ENCODE measurements at regions of chr17 and their contacts with region 1.

Region 1: GRCh38 chr17:63773381-63774140 is at the start of gene CCDC47:
- DNase-seq: peak; percentile 99
- total RNA-seq, gene CCDC47: 78.7 TPM

Region 2: GRCh38 chr17:62444063-62444462 is 1329.5 kb before region 1 on chr17:
- intact Hi-C with region 1: no loop called
- DNase-seq: no peak

Region 3: DNA sequence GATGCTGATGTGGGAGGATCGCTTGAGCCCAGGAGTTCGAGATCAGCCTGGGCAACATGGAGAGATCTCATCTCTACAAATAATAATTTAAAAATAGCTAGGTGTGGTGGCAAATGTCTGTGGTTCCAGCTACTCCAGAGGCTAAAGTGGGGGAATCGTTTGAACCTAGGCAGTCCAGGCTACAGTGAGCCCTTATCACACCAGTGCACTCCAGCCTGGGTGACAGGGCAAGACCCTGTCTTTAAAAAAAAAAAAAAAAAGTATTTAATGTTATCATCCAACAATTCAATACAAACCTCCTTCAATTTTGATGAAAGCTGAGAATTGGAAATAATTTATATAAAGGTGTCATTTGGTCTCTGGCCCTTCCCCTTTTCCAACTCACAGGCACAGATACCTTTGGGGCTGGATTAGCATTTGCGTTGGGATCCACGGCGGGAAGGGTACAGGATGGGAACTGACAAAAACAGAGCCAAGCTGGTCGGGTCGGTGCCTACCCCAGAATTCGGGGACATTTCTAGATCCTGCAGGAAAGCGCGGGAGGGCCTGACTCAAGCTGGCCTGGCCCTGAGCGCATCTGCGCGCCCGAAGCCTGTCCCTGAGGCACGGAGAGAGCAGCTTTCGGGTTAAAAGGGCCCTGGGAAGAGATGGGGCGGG is 224.1 kb before region 1 on chr17:
- intact Hi-C with region 1: no loop called
- DNase-seq: no peak

Region 4: DNA sequence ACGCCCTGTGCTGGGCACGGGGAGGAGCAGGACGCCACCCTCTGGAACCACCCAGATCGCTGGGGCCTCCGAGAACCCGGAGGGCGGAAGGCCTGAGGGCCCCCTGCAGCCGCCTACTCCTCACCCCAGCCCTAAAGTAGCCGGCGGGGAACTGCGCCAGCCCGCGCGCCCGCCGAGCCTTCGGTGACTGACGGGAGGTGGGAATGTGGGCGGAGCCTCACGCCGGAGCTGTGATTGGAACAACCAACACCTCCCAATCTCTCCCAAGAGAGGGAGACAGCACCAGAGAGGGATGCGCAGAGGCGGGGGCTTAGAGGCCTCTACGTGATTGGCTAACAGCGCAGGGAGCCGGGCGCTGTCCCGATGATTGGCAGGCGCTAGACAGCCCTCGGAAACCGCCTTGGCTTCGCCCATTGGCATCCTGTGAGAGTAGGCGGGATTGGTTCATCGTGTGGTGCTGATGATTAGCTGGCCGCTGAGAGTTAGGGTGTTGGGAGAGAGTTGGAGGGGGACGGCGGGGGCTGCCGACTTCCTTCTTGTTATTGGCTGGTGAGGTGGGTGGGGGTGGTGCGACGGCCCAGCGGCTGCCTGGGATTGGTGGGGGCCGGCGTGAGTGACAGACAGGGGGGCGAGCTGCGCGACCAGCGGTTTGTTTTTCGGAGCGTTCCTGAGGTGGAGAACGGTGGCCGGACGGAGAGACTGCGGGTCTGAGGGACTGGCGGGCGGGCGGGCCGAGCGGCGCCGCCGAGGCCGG is 151.6 kb before region 1 on chr17 and contains the start of gene MAP3K3:
- intact Hi-C with region 1: loop called (anchors 5 kb)
- DNase-seq: peak; percentile 100
- total RNA-seq, gene MAP3K3: 101 TPM

Region 5: DNA sequence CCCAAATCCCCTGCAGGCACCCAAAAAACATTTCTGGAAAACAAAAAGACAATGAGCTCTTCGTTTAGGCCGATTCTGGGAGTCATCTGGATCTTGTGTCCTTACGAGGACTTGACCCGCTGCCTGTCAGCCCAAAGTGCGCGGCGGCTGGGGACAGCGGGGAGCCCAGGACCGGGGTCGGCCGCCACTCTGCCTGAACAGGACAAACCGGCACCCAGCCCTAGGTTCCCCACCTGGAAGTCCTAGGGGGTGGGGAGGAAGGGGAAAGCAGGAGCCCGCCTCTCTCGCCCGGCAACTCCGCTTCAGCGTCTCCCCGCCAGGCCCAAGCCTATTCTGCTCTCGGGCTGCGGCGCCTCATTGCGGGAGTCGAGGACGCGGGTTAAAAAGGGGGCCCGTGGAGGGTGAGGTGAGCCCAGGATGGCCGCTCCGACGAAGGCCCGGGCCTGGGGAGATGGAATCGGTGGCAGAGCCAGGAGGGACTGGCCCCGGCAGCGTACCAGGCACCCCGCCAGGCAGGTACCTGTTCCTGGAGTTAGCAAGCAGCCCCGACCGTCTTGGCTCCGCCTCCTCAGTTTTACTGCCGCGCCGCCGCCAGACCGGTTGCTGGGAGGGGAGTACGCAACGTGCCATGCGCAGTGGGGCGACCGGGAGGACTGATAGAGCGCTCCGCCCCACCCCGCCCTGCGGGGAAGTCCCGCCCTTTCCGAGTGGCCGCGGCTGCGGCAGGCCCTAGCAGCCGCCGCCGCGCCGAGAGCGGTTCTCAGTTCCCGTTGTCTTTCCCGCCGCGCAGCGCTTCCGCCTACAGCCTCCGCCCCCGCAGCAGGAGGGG is 32.1 kb before region 1 on chr17 and contains the start of gene STRADA:
- intact Hi-C with region 1: loop called (anchors 1 kb)
- DNase-seq: peak; percentile 100
- total RNA-seq, gene STRADA: 20.4 TPM

Region 6: GRCh38 chr17:63827002-63827771 is 53.6 kb after region 1 on chr17 and contains the starts of genes FTSJ3 and PSMC5:
- intact Hi-C with region 1: loop called (anchors 2 kb)
- DNase-seq: peak; percentile 98
- total RNA-seq, gene FTSJ3: 29.9 TPM
- total RNA-seq, gene PSMC5: 109 TPM

Measured in cardiac septum (tissue), 1 donor.